ENCODE measurements at regions of chr6 and their contacts with region 1.

Region 1: DNA sequence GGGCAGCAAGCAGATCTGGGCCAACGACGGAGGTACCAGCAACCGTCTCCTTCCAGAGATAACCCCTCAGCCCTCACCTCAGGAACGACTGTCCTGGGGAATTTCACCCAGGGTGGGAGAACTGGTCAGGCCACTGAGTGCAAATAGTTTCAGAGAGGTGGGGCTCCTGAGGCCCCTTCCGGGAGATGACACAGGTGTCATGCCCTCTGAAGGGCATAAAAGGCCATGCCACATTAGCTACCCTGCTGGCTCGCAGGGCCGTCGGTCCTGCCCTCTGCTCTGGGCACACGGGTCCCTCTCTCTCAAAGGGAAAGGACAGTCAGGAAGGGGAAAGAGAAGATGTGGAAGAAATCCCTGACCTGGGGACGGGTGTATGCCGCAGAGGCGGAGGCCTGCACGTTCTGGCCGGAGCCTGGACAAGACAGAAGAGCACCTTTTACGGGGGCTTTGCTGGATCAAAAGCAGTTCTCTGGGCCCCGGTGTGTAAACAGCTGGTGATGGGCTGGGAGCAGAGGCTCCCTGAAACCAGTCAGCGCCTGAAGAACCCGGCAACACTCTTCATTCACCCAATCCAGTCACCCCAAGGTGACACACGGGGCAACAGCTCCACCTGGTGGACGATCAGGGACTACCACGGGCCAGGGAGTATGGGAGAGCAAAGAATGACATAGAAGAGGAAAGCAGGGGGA is 6.4 kb upstream of the TAF8 start:
- DNase-seq: peak; percentile 83
- CTCF ChIP-seq: peak; percentile 93

Region 2: DNA sequence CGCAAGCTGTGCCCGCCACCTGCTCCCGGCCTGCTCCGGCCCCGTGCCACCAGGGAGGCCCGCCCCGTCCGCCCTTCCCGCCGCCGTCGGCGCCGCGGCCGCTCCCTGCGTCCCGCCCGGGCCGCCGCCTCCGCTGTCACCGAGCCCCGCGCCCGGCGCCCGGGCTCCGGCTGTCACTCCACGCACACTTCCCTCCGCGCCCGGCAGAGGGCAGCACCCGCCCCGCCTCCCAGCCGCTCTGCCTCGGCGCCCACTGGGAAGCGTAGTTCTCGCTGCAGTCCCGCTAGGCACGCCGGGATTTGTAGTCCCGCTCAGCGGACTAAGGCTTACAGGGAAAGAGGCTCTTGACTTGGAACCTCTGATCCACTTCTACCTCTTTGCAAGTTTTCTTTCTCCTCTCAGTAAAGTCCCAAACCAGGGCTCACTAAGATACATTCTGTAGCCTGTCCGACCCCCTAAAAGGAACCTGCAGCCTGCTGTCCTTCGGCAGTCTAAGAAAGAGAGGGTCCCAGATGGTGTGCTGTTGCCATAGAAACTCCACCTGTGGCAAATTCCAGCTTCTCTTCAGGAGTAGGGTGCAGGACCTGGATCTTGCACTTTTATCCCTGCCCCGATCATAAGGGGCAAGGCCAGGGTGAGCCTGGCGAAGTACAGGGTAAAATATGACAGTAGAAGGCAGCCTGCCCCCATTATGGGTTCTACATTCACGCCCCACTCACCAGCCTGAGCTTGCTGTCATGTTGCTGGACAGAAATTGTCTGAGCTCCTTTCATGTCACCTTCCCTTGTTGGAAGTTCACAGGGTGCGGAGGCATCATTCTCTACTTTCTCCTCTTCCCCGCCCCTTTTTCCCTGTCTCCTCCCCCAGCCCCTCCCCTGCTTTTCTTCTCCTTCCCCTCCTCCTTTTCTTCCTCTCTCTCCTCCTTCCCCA is 308.2 kb before region 1 on chr6 and contains the start of gene TFEB:
- CTCF ChIA-PET with region 1: interaction called, 10 read pairs
- POLR2A ChIA-PET with region 1: no interaction called
- DNase-seq: peak; percentile 96
- CTCF ChIP-seq: peak; percentile 97

Region 3: DNA sequence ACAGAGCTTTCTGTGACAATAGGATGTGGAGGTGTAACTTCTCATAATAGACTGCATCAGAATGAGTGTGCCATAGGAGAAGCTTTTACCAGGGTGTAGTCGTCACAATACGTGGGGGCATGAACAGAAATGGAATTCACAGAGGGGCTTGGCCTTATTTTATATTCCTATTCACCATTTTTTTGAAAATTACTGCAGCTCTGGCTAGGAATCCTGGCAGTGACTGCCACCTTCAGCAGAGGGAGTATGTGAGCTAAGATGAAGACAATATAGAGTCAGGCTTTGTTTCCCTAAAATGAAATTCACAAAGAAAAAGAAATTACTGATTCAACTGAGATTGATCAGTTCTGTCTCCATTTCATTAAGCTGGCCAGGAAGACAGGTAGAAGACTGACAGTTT is 242.6 kb before region 1 on chr6:
- CTCF ChIA-PET with region 1: interaction called, 29 read pairs
- POLR2A ChIA-PET with region 1: no interaction called
- DNase-seq: no peak
- CTCF ChIP-seq: peak; percentile 54

Region 4: DNA sequence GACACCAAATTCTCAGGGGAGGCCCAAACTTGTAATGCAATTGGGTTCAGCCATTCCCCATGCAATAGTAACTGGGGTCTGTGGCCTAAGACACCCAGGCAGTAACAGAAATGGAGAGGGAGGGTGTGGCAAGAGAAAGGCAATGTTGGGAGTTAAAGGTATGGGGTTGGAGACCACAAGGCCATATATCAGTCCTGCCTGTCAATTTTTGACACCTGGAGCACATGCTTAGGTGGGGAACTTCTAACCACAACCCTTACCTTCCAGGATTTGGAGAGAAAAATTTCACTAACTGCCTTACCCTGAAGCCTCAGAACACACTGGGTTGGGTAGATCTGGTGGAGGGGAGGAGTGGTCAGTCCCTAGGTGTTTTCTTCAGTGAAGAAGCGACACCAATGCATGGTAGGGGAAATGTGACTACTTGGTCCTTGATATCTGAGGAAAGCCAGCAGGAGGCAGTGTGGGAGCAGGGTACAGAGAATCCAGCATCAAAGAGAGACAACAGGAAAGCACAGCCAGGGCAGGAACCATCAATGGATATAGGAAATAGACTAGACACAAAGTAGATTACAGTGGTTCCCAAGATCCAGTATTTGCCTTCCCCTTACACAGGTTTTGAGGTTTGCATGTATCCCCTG is 141.9 kb before region 1 on chr6:
- CTCF ChIA-PET with region 1: interaction called, 10 read pairs
- POLR2A ChIA-PET with region 1: no interaction called
- DNase-seq: peak; percentile 30
- CTCF ChIP-seq: peak; percentile 22

Region 5: DNA sequence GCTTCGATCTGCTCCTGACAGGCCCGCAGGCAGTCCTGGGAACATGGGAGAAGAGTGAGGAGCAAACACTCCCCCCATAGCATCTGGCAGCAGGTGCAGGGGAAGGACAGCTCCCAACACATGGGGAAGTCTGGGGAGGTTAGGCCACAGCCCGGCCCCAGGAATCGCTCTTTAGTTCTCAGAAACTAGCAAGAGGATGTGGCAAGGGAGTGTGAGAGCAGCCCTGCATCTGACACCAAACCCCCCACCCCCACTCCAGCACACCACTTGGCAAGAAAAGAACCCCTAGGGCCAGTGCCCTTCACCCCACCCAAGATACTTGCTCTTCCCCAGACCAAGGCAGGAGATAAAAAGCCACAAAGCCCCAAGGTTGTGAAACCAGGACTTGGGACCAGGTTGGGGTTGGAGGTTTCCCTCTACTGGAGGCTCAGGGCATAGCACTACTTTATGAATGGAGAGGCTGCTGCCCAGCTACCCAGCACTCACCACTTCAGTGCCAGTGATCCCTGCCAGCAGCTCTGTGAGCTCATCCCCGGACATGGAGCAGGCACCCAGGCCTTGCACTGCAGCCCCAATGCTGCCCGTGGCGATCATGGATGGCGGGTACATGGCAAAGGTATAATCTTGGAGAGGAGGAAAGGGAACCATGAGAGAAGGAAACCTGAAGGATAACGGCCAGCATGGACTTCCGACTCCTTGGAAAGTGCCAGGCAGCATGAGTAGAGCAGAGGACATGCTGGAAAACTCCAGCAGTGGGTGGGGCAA is 107.7 kb before region 1 on chr6:
- CTCF ChIA-PET with region 1: interaction called, 57 read pairs
- POLR2A ChIA-PET with region 1: no interaction called
- DNase-seq: peak; percentile 78
- CTCF ChIP-seq: peak; percentile 82

Region 6: GRCh38 chr6:42021847-42022754 is 21.8 kb before region 1 on chr6:
- CTCF ChIA-PET with region 1: interaction called, 118 read pairs
- POLR2A ChIA-PET with region 1: no interaction called
- DNase-seq: peak; percentile 66
- CTCF ChIP-seq: no peak

Region 7: GRCh38 chr6:42110683-42111082 is 66.8 kb after region 1 on chr6:
- CTCF ChIA-PET with region 1: no interaction called
- POLR2A ChIA-PET with region 1: no interaction called
- DNase-seq: no peak
- CTCF ChIP-seq: no peak

Measured in GM10248 (cell line).